Heart right ventricle (tissue), 16 donors: ENCODE measurements at regions of chr17 and their contacts with region 1.

Region 1: DNA sequence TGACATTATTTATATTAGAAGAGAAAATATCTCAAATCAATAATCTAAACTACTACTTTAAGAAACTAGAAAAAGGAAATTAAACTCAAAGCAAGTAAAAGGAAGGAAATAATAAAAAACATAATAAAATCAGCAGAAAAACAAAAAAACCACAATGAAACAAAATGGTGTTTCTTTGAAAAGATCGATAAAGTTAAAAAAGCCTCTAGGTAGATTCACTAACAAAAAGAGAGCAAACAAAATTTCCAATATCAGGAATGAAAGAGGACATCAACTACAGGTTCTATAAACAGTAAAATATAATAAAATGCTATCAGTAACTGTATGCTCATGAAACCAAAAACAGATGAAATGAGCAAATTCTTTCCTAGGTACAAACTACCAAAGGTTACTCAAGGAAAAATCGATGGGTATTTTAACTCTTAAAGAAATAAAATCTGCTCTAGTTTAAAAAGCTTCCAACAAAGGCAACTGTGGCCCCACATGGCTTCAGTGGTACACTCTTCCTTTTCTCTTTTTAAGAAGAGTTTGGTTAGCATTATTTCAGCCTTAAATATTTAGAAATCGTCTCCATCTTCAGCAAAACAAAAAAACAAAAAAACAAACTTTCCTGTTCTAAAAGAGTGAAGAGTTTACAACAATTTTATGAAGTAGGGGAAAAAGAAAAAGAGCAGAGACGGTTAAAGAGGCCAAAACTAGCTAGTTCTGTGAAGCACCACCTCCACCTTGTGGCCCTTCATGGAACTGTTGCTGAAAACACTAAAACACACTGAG is 102.2 kb downstream of the TRIM37 start:
- DNase-seq: peak in 1 of 2 donors; percentile 58
- ATAC-seq: peak in 6 of 8 donors; percentile 66 to 81 (median 74)
- H3K4me3 ChIP-seq: no peak overlapping the region
- H3K27ac ChIP-seq: peak overlapping the region in 1 of 10 donors; percentile 3
- H3K4me1 ChIP-seq: peaks cover 0 to 29% (median 6%) of the 10 kb centered on the region in 9 donors
- H3K27me3 ChIP-seq: no peaks in the 10 kb centered on the region
- CTCF ChIP-seq: peak; percentile 79 to 98 (median 96)

Region 2: DNA sequence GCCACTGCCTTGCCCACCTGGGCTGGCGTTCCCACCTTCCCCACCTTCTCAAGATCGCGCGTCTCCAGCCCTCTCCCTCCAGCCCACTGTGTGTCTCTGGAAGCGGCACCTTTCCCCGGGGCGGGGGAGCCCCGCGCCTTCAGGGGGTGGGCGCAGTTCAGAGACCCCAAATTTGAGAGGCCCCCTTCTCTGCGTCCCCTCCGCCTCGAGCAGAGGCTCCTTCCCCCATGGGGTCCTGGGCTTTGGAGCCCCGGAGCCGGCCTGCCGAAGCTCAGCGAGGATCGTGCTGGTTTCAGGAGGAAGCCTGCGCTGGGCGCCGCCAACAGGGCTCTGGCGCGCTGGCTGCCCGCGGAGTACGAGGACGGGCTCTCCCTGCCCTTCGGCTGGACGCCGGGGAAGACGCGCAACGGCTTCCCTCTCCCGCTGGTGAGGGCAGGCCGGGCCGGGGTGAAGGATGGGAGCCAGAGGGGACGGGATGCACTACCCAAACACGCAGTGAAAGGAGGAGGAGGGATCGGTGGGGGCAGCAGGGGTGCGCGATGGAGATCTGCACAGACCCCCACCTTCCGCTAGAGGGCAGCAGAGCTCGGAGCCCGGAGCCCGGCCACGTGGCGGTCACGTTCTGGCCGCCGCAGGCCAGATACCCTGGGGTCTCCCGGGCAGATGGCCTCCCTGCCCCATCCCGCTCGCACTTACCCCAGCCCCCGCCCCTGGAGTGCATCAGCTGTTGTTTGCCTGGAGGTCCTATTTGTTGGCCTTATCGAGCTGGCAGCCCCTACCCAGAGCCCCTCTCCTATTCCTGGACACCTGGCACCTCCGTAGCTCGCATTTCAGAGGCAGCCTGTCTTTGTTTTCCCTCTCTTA is 755.0 kb before region 1 on chr17:
- intact Hi-C with region 1: loop called in 1 of 10 experiments (anchors 5 kb)
- DNase-seq: peak; percentile 51 to 72
- ATAC-seq: peak; percentile 89 to 93 (median 91)
- H3K4me3 ChIP-seq: peak overlapping the region; percentile 26 to 56 (median 44)
- H3K27ac ChIP-seq: no peak overlapping the region
- H3K4me1 ChIP-seq: peaks cover 0 to 11% (median 8%) of the 10 kb centered on the region in 9 donors
- H3K27me3 ChIP-seq: peaks cover 0 to 83% (median 62%) of the 10 kb centered on the region in 7 donors
- CTCF ChIP-seq: peak; percentile 89 to 98 (median 96)

Region 3: GRCh38 chr17:58577642-58578091 is 426.9 kb before region 1 on chr17:
- intact Hi-C with region 1: loop called in 4 of 10 experiments (anchors 5 to 10 kb)
- DNase-seq: peak; percentile 23 to 43
- ATAC-seq: peak in 3 of 8 donors; percentile 26 to 53 (median 31)
- H3K4me3 ChIP-seq: no peak overlapping the region
- H3K27ac ChIP-seq: no peak overlapping the region
- H3K4me1 ChIP-seq: peaks cover 0 to 13% (median 0%) of the 10 kb centered on the region in 9 donors
- H3K27me3 ChIP-seq: no peaks in the 10 kb centered on the region
- CTCF ChIP-seq: peak; percentile 21 to 71 (median 64)

Region 4: GRCh38 chr17:58587702-58588254 is 416.7 kb before region 1 on chr17:
- intact Hi-C with region 1: loop called in 6 of 10 experiments (anchors 1 to 10 kb)
- DNase-seq: peak; percentile 39 to 40
- ATAC-seq: peak in 6 of 8 donors; percentile 41 to 79 (median 62)
- H3K4me3 ChIP-seq: no peak overlapping the region
- H3K27ac ChIP-seq: no peak overlapping the region
- H3K4me1 ChIP-seq: no peaks in the 10 kb centered on the region
- H3K27me3 ChIP-seq: no peaks in the 10 kb centered on the region
- CTCF ChIP-seq: peak; percentile 85 to 96 (median 94)

Region 5: GRCh38 chr17:58710936-58711775 is 293.4 kb before region 1 on chr17:
- intact Hi-C with region 1: loop called (anchors 1 to 10 kb)
- DNase-seq: peak in 1 of 2 donors; percentile 21
- ATAC-seq: no peak
- H3K4me3 ChIP-seq: no peak overlapping the region
- H3K27ac ChIP-seq: no peak overlapping the region
- H3K4me1 ChIP-seq: no peaks in the 10 kb centered on the region
- H3K27me3 ChIP-seq: no peaks in the 10 kb centered on the region
- CTCF ChIP-seq: peak; percentile 40 to 83 (median 74)